ENCODE measurements at regions of chr12 and their contacts with region 1.

Region 1: GRCh38 chr12:75483431-75483830 is 2.9 kb downstream of the GLIPR1 start:
- DNase-seq: no peak
- ATAC-seq: no peak
- H3K4me3 Mint-ChIP-seq: no peak overlapping the region
- H3K27ac Mint-ChIP-seq: no peak overlapping the region; the same call in 1 of the 2 replicates
- H3K4me1 Mint-ChIP-seq: peaks cover 37% of the 10 kb centered on the region
- H3K27me3 Mint-ChIP-seq: no peaks in the 10 kb centered on the region
- CTCF ChIP-seq: no peak

Region 2: DNA sequence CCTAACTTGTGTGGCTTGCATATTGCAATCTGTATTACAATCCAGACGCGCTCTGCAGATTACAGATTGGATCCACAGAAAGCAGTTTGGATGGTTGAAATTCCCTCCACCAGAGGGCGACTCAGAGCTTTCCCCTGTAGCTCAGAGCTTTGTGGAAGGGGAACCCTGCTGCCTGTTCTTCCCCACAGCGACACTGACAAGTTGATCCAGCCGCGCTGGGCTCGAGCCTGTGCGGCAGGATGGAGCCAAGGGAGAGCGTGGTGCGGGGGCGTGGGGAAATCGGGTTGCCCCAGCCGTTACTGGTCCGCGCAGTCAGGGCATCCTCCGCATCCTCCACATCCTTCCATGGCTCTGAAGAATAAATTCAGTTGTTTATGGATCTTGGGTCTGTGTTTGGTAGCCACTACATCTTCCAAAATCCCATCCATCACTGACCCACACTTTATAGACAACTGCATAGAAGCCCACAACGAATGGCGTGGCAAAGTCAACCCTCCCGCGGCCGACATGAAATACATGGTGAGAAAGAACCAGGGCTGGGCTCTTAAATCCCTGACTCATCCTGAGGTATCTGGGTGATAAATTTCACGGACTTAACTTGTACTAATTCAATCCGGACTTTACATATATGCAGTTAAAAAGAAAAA is 148.9 kb before region 1 on chr12 and contains the start of gene GLIPR1L1:
- CTCF ChIA-PET with region 1: interaction called, 13 read pairs
- POLR2A ChIA-PET with region 1: no interaction called
- DNase-seq: peak; percentile 96
- ATAC-seq: peak; percentile 91
- H3K4me3 Mint-ChIP-seq: peak within 1 kb of the TSS; percentile 81
- H3K27ac Mint-ChIP-seq: no peak within 1 kb of the TSS
- H3K4me1 Mint-ChIP-seq: peaks cover 9% of the 10 kb centered on the region
- H3K27me3 Mint-ChIP-seq: no peaks in the 10 kb centered on the region
- CTCF ChIP-seq: peak; percentile 86
- total RNA-seq, gene GLIPR1L1: 0.69 TPM in 1 of 3 replicates, not detected in the others

Region 3: DNA sequence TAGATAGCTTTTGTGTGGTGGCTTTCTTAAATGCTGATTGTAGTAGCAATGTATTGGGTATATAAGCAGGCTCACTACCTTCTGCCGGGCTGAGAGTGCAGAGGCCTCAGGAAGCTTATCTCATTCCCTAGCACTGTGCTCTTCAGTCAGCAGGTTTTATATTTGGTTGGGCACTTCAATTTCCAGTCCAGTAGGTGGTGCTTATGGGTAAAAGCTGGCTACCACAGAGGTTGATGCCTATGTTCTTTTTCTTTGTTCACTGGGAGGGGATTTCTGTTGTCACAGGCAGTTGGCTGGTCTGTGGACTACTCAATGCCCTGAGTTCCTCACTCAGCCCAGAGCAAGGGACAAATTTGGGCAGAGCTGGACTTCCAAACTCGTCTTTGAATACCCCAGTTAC is 45.9 kb before region 1 on chr12:
- CTCF ChIA-PET with region 1: interaction called, 10 read pairs
- POLR2A ChIA-PET with region 1: no interaction called
- DNase-seq: no peak
- ATAC-seq: peak; percentile 84
- H3K4me3 Mint-ChIP-seq: no peak overlapping the region
- H3K27ac Mint-ChIP-seq: no peak overlapping the region
- H3K4me1 Mint-ChIP-seq: peaks cover 15% of the 10 kb centered on the region
- H3K27me3 Mint-ChIP-seq: no peaks in the 10 kb centered on the region
- CTCF ChIP-seq: no peak

Region 4: DNA sequence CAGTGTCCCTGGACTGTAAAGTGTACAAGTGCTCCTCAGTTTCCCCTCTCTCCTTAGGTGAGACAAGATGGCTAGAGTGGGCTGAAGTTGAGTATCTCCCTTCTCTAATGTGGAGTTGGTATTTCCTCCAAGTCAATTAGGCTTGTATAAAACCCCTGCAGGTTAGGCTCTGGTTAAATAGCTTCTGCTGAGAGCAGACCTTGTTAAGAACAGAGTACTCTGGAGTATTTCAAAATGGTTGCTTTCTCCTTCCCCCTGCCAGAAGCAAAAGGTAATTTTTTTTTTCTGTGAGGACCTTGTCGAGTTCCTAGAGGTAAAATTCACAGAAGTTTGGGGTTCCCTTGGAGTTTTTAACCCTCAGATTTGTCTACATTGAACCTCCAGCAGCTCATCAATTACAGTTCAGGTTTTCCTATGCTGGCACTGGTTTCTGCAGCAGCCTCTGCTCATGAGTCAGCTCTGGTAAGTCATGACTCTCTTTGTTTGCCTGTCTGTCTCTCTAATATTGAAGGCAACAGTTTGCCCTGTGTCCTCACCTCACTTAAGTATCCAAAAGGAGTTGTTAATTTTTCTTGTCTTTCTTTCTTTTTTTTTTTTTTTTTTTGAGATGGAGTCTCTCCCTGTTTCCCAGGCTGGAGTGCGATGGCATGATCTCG is 30.6 kb before region 1 on chr12:
- CTCF ChIA-PET with region 1: no interaction called
- POLR2A ChIA-PET with region 1: no interaction called
- DNase-seq: no peak
- ATAC-seq: no peak
- H3K4me3 Mint-ChIP-seq: no peak overlapping the region
- H3K27ac Mint-ChIP-seq: no peak overlapping the region
- H3K4me1 Mint-ChIP-seq: no peaks in the 10 kb centered on the region
- H3K27me3 Mint-ChIP-seq: no peaks in the 10 kb centered on the region
- CTCF ChIP-seq: no peak

Region 5: DNA sequence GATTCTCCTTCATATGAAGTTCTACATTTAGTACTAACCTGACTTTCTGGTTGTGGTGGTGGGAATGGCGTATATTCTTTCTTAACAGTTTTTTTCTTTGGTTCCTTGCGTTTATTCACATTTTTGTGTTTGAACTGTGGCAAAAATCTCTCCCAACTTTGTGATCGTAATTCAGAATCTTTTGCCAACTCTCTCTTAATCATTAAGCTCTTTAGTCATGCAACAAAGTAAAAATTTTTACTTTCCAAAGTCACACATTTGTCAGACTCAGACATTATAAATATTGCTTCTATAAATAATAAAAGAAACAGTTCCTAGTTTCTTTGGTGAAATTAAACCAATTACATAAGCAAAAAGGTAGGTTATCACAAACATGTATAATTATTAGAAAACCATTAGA is 20.4 kb after region 1 on chr12:
- CTCF ChIA-PET with region 1: no interaction called
- POLR2A ChIA-PET with region 1: no interaction called
- DNase-seq: no peak
- ATAC-seq: no peak
- H3K4me3 Mint-ChIP-seq: no peak overlapping the region
- H3K27ac Mint-ChIP-seq: no peak overlapping the region
- H3K4me1 Mint-ChIP-seq: no peaks in the 10 kb centered on the region
- H3K27me3 Mint-ChIP-seq: no peaks in the 10 kb centered on the region
- CTCF ChIP-seq: no peak

Region 6: DNA sequence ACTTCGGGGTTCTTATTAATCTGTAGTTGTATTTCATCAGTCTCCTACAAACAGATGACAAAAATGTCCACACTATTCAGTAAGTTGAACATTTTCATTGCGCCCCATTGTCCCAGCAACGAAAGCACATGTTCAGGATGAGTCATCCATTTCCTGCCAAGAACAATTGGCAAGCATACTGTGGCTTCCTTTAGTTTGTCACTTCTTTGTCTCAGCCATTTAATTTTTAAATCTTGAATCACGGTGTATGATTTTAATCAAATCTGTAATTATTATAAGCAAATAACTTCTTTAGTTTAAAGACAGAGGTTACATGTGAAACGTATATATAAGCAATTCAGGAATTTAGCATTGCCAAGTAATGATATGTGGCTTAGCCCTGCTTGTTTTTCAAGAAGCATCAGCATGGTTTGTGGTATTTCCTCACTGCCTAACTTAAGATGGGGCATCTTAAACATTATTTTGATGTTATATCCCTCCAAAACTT is 239.3 kb after region 1 on chr12:
- CTCF ChIA-PET with region 1: no interaction called
- POLR2A ChIA-PET with region 1: no interaction called
- DNase-seq: no peak
- ATAC-seq: no peak
- H3K4me3 Mint-ChIP-seq: no peak overlapping the region
- H3K27ac Mint-ChIP-seq: no peak overlapping the region
- H3K4me1 Mint-ChIP-seq: peaks cover 71% of the 10 kb centered on the region
- H3K27me3 Mint-ChIP-seq: peaks cover 31% of the 10 kb centered on the region
- CTCF ChIP-seq: no peak